Heart left ventricle (tissue), 16 donors: ENCODE measurements at regions of chr11 and their contacts with region 1.

Region 1: GRCh38 chr11:16605894-16606783 is 132.3 kb upstream of the C11orf58 start:
- DNase-seq: peak; percentile 87 to 92 (median 90)
- ATAC-seq: peak; percentile 43 to 66 (median 56)
- H3K4me3 ChIP-seq: peak overlapping the region; percentile 69 to 93 (median 84)
- H3K27ac ChIP-seq: peak overlapping the region; percentile 85 to 100 (median 97)
- H3K4me1 ChIP-seq: peaks cover 0 to 38% (median 9%) of the 10 kb centered on the region in 12 donors
- H3K27me3 ChIP-seq: peaks cover 0 to 79% (median 3%) of the 10 kb centered on the region in 9 donors
- CTCF ChIP-seq: peak; percentile 95 to 99 (median 98)
- POLR2A ChIP-seq: peak in 1 of 2 donors; percentile 47

Region 2: GRCh38 chr11:15770798-15771414 is 835.2 kb before region 1 on chr11:
- intact Hi-C with region 1: loop called in 5 of 10 experiments (anchors 5 kb)
- DNase-seq: peak in 4 of 5 donors; percentile 29 to 47 (median 36)
- ATAC-seq: peak in 1 of 4 donors; percentile 60
- H3K4me3 ChIP-seq: no peak overlapping the region
- H3K27ac ChIP-seq: no peak overlapping the region
- H3K4me1 ChIP-seq: peaks cover 0 to 21% (median 10%) of the 10 kb centered on the region in 12 donors
- H3K27me3 ChIP-seq: no peaks in the 10 kb centered on the region
- CTCF ChIP-seq: peak; percentile 36 to 76 (median 60)
- POLR2A ChIP-seq: no peak

Region 3: GRCh38 chr11:15941201-15941770 is 664.9 kb before region 1 on chr11:
- intact Hi-C with region 1: loop called in 4 of 10 experiments (anchors 5 to 10 kb)
- DNase-seq: peak in 2 of 5 donors; percentile 30 to 50
- ATAC-seq: peak in 3 of 4 donors; percentile 47 to 84 (median 66)
- H3K4me3 ChIP-seq: peak overlapping the region in 1 of 12 donors; percentile 1
- H3K27ac ChIP-seq: no peak overlapping the region
- H3K4me1 ChIP-seq: peaks cover 0 to 6% (median 0%) of the 10 kb centered on the region in 12 donors
- H3K27me3 ChIP-seq: no peaks in the 10 kb centered on the region
- CTCF ChIP-seq: peak; percentile 65 to 91 (median 82)
- POLR2A ChIP-seq: no peak

Region 4: DNA sequence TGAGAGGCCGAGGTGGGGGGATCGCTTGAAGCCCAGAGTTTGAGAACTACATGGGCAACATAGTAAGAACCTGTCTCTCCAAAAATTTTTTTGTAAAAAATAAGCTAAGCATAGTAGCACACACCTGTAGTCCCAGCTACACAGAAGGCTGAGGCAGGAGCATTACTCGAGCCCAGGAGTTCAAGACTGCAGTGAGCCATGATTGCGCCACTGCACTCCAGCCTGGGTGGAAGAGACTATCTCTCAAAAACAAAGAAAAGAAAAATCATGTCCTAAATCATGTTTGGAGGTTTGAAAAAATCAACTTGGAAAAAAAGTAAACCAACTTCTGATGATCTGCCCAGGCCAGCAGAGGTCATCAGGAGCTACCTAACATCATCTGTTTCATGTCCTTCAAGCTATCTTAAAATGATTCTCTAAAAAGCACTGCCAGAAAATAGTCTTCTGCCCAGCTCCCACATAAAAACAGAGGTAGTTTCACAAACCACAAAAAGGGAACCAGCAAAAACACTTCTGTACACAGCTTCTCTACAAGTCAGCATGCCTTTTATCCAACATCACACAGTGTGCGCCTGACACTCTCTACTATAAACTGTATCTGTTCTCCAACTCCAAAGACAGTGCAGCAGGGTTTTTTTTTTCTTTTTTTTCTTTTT is 414.8 kb before region 1 on chr11:
- intact Hi-C with region 1: loop called (anchors 2 to 10 kb)
- DNase-seq: peak in 1 of 5 donors; percentile 14
- ATAC-seq: peak in 1 of 4 donors; percentile 42
- H3K4me3 ChIP-seq: no peak overlapping the region
- H3K27ac ChIP-seq: no peak overlapping the region
- H3K4me1 ChIP-seq: peaks cover 0 to 40% (median 24%) of the 10 kb centered on the region in 12 donors
- H3K27me3 ChIP-seq: no peaks in the 10 kb centered on the region
- CTCF ChIP-seq: peak in 8 of 12 donors; percentile 23 to 49 (median 32)
- POLR2A ChIP-seq: no peak

Region 5: DNA sequence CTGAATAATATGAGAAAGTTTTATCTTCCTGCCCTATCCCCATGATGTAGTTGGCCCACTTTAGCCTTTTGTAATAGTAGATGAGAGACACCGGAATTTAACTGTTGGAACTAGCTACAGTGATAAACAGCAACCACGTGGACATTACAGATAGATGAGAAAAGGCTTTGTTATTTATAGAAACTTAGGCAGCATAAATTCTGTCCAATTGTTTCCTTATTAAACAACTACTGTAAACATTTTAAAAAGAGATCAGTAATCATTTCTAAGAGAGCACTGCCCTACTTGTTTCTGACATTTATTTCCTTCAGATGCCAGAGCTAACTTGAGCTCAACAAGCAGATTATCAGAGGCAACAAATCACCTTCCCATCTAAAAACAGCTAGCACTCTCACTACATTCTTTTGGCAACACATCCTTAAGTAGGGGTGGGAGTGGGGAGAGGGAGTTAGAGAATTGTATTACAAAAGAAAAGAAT is 312.9 kb before region 1 on chr11:
- intact Hi-C with region 1: loop called in 5 of 10 experiments (anchors 2 to 10 kb)
- DNase-seq: no peak
- ATAC-seq: peak; percentile 86 to 94 (median 89)
- H3K4me3 ChIP-seq: no peak overlapping the region
- H3K27ac ChIP-seq: peak overlapping the region; percentile 37 to 87 (median 66)
- H3K4me1 ChIP-seq: peaks cover 0 to 34% (median 12%) of the 10 kb centered on the region in 12 donors
- H3K27me3 ChIP-seq: no peaks in the 10 kb centered on the region
- CTCF ChIP-seq: no peak
- POLR2A ChIP-seq: no peak

Region 6: DNA sequence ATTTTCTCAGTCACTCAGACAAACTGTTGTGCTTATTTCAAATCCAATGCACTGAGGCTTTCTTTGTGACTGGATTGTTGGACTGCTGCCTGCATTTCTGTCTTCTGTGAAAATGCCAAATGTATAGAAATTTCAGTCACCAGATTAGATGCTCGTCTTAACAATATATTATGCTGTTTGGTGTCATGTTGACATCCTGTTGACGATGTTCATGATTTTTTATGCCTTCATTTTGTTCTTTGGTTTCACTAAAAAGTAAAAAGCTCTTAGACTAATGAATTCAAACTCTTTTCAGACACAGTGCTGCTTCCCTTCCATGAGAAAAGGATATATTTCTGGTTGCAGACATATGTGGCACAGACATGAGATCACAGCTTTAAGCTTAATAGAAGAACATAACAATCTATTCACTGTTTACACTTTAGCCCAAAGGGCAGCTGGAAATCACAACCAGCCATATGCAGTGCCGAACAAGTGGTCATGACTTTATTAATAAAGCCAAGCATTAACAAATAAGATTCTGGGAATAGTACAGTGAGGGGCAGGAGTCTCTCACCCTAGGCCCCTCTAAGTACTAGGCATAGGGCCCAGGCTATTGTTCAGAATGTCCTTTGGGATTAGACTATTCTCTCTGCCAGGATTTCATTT is 240.4 kb before region 1 on chr11:
- intact Hi-C with region 1: loop called in 2 of 10 experiments (anchors 5 to 10 kb)
- DNase-seq: no peak
- ATAC-seq: peak; percentile 44 to 61 (median 48)
- H3K4me3 ChIP-seq: no peak overlapping the region
- H3K27ac ChIP-seq: peak overlapping the region in 2 of 12 donors; percentile 17 to 28
- H3K4me1 ChIP-seq: peaks cover 0 to 34% (median 16%) of the 10 kb centered on the region in 12 donors
- H3K27me3 ChIP-seq: no peaks in the 10 kb centered on the region
- CTCF ChIP-seq: no peak
- POLR2A ChIP-seq: no peak